ENCODE measurements at regions of chr2 and their contacts with region 1.

Region 1: DNA sequence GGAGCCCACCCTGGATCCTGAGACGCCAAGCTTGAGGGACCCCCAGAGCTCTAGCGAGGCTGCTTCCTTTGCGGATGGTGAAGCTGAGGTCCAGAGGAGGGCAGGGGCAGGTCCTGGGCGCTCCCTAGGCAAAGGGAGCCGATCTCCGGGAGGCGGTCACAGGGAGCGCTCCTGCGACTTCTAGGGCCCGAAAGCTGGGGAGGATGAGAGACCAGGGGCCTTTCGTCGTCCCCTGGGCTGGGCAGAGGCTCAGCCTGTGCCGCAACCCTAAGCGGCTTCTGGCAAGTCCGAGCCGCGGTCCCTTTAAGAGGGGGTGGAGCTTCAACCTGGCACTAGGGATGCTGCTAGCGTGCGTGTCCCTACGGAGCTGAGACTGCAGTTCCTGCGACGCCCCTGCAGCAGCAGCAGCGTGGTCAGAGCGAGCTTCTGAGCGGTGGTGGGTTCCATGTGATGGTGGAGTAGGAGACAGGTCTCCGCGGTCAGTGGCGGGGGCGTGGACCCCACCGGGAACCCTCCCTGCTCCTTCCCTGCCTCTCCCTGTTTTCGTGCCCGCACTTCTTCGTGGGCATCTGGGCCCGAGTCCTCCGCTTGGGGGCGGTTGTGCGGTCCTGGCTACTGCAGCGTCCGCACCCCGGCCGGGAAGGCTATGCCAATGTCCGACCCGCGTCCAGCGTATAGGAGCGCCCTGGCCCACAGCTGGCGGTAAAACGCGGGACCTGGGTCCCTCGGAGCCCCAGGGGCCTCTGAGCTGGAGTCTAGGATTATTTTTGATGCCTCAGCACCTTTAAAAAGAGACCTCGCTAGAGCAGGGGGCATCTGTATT is 154.6 kb downstream of the CCDC74A start:
- DNase-seq: peak; percentile 66
- H3K4me3 Mint-ChIP-seq: peak overlapping the region; percentile 86
- H3K27ac Mint-ChIP-seq: peak overlapping the region; percentile 47
- H3K4me1 Mint-ChIP-seq: peaks cover 30% of the 10 kb centered on the region
- H3K27me3 Mint-ChIP-seq: peaks cover 6% of the 10 kb centered on the region

Region 2: GRCh38 chr2:131521961-131522794 is 160.2 kb before region 1 on chr2:
- intact Hi-C with region 1: loop called (anchors 2 kb)
- DNase-seq: no peak
- H3K4me3 Mint-ChIP-seq: no peak overlapping the region
- H3K27ac Mint-ChIP-seq: no peak overlapping the region
- H3K4me1 Mint-ChIP-seq: peaks cover 4% of the 10 kb centered on the region
- H3K27me3 Mint-ChIP-seq: no peaks in the 10 kb centered on the region

Region 3: GRCh38 chr2:131754929-131755720 is 72.8 kb after region 1 on chr2:
- intact Hi-C with region 1: no loop called
- DNase-seq: no peak
- H3K4me3 Mint-ChIP-seq: no peak overlapping the region
- H3K27ac Mint-ChIP-seq: no peak overlapping the region
- H3K4me1 Mint-ChIP-seq: no peaks in the 10 kb centered on the region
- H3K27me3 Mint-ChIP-seq: no peaks in the 10 kb centered on the region

Region 4: DNA sequence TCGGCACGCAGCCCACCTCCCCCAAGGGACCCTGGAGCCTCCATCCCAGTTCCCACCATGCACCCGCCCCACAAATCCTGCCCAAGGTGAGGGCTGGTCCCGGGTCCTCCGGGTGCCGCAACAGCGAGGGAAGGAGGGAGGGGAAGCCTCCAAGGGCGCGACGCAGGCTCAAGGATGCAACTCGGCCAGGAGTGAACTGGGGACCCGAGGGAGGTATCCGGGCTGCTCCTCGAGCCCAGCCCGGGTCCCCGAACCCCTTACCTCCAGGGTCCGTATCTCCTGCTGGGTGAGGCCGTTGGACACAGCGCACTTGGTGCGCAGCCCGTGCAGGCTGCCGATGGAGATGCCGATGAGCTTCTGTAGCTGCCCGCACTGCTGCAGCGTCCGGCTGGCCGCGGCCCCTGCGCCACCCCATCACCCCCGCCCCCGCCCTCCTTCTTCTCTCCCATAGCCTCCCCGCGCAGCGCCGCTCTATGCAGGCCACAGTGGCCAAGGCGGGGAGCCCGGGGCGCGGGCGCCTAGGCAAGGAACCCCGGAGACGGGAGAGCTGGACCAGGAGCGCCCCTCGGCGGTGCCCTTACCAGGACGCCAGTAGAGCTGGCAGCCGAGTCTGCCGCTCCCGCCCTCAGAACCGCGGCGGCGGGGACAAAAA is 355.3 kb after region 1 on chr2:
- intact Hi-C with region 1: no loop called
- DNase-seq: no peak
- H3K4me3 Mint-ChIP-seq: no peak overlapping the region
- H3K27ac Mint-ChIP-seq: no peak overlapping the region
- H3K4me1 Mint-ChIP-seq: no peaks in the 10 kb centered on the region
- H3K27me3 Mint-ChIP-seq: peaks cover 27% of the 10 kb centered on the region

Measured in activated T-helper 2 cell treated with anti-CD3 and anti-CD28 coated beads, Interferon-gamma antibody, Interleukin-2, Interleukin-4, amounts not matched to agents 10 μg/mL and 5 μg/mL and 100 μg/mL, durations not matched to agents 14 hours and 24 hours and 36 hours (primary cell).